ENCODE measurements at regions of chr20 and their contacts with region 1.

Region 1: GRCh38 chr20:38962044-38962927 is at the start of gene DHX35:
- DNase-seq: peak; percentile 99
- ATAC-seq: peak; percentile 99
- H3K4me3 Mint-ChIP-seq: peak within 1 kb of the TSS; percentile 87
- H3K27ac Mint-ChIP-seq: peak within 1 kb of the TSS; percentile 93
- H3K4me1 Mint-ChIP-seq: peaks cover 20% of the 10 kb centered on the region
- H3K27me3 Mint-ChIP-seq: no peaks in the 10 kb centered on the region
- CTCF ChIP-seq: peak; percentile 18
- total RNA-seq, gene DHX35: 12.2 to 12.6 TPM

Region 2: DNA sequence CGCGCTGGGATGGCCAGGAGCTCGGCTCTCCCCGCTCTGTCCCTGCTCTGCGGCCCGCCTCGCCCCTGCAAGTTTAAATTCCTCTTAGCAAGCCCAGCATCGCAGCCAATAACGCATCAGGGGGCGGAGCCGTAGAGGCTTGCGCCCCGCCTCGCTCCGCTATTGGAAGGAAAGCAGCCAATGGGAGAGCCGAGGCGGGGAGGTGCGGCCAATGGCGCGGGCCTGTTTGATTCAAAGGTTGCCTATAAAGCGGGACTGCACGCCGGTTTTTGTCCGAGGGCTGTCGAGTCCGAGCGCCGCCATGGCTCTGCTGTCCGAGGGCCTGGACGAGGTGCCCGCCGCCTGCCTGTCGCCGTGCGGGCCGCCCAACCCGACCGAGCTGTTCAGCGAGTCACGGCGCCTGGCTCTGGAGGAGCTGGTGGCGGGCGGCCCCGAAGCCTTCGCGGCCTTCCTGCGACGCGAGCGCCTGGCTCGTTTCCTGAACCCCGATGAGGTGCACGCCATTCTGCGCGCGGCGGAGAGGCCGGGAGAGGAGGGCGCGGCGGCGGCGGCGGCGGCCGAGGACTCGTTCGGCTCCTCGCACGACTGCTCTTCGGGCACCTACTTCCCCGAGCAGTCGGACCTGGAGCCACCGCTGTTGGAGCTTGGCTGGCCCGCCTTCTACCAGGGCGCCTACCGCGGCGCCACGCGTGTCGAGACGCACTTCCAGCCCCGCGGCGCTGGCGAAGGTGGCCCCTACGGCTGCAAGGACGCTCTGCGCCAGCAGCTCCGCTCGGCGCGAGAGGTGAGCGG is 35.9 kb before region 1 on chr20 and contains the start of gene FAM83D:
- CTCF ChIA-PET with region 1: interaction called, 14 read pairs
- POLR2A ChIA-PET with region 1: interaction called, 20 read pairs
- intact Hi-C with region 1: no loop called
- DNase-seq: peak; percentile 99
- ATAC-seq: peak; percentile 97
- H3K4me3 Mint-ChIP-seq: peak within 1 kb of the TSS; percentile 82
- H3K27ac Mint-ChIP-seq: peak within 1 kb of the TSS; percentile 52
- H3K4me1 Mint-ChIP-seq: peaks cover 22% of the 10 kb centered on the region
- H3K27me3 Mint-ChIP-seq: no peaks in the 10 kb centered on the region
- CTCF ChIP-seq: no peak
- total RNA-seq, gene FAM83D: 12.6 to 13.8 TPM

Region 3: DNA sequence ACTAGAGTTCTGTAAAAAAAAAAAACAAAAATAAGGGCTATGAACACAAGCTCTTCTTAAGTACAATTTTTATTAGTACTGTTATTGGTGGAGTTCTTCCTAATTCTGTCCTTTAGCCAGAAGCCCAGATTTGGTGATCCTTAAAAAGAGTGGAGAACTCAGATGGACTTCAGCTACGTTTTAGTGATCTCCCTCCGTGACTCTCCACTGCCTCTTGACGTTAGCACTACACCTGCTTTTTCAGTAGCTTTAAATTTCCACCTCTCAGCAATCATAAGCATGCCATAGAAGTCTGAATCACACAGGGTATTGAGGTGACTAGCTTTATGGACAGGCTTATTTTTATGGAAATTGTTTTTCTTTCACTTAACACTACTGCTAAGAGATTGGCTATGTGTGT is 17.6 kb after region 1 on chr20:
- CTCF ChIA-PET with region 1: interaction called, 10 read pairs
- POLR2A ChIA-PET with region 1: interaction called, 6 read pairs
- intact Hi-C with region 1: no loop called
- DNase-seq: no peak
- ATAC-seq: no peak
- H3K4me3 Mint-ChIP-seq: no peak overlapping the region
- H3K27ac Mint-ChIP-seq: no peak overlapping the region
- H3K4me1 Mint-ChIP-seq: peaks cover 6% of the 10 kb centered on the region
- H3K27me3 Mint-ChIP-seq: no peaks in the 10 kb centered on the region
- CTCF ChIP-seq: no peak

Region 4: DNA sequence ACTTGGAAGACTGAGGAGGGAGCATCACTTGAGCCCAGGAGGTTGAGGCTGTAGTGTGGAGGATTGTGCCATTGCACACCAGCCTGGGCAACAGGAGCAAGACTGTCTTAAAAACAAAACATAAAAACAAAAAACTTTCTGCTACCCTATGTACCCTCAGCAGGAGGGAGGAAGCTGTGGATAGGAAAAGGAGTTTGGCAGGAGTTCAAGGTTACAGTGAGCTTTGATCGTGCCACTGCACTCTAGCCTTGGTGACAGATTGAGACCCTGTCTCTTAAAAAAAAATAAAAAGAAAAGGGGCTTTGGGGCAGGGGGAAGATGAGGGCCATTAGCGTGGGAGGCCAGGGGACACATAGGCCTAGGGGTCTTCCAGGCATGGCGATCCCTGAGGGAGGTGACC is 135.6 kb after region 1 on chr20:
- CTCF ChIA-PET with region 1: no interaction called
- POLR2A ChIA-PET with region 1: no interaction called
- intact Hi-C with region 1: no loop called
- DNase-seq: no peak
- ATAC-seq: no peak
- H3K4me3 Mint-ChIP-seq: no peak overlapping the region
- H3K27ac Mint-ChIP-seq: no peak overlapping the region
- H3K4me1 Mint-ChIP-seq: no peaks in the 10 kb centered on the region
- H3K27me3 Mint-ChIP-seq: peaks cover 17% of the 10 kb centered on the region
- CTCF ChIP-seq: no peak

Region 5: GRCh38 chr20:39453890-39454289 is 491.6 kb after region 1 on chr20:
- CTCF ChIA-PET with region 1: no interaction called
- POLR2A ChIA-PET with region 1: no interaction called
- intact Hi-C with region 1: no loop called
- DNase-seq: no peak
- ATAC-seq: no peak
- H3K4me3 Mint-ChIP-seq: no peak overlapping the region
- H3K27ac Mint-ChIP-seq: no peak overlapping the region
- H3K4me1 Mint-ChIP-seq: no peaks in the 10 kb centered on the region
- H3K27me3 Mint-ChIP-seq: peaks cover 6% of the 10 kb centered on the region
- CTCF ChIP-seq: no peak